Activated CD4-positive, alpha-beta T cell treated with anti-CD3 and anti-CD28 coated beads for 36 hours (primary cell): ENCODE measurements at regions of chr11 and their contacts with region 1.

Region 1: GRCh38 chr11:59668950-59669610 is at the start of gene PATL1:
- DNase-seq: peak; percentile 99
- ATAC-seq: peak; percentile 93
- H3K4me3 Mint-ChIP-seq: peak within 1 kb of the TSS; percentile 81
- H3K27ac Mint-ChIP-seq: peak within 1 kb of the TSS; percentile 92
- H3K4me1 Mint-ChIP-seq: peaks cover 37% of the 10 kb centered on the region
- H3K27me3 Mint-ChIP-seq: no peaks in the 10 kb centered on the region
- total RNA-seq, gene PATL1: 59.8 to 88.7 TPM

Region 2: DNA sequence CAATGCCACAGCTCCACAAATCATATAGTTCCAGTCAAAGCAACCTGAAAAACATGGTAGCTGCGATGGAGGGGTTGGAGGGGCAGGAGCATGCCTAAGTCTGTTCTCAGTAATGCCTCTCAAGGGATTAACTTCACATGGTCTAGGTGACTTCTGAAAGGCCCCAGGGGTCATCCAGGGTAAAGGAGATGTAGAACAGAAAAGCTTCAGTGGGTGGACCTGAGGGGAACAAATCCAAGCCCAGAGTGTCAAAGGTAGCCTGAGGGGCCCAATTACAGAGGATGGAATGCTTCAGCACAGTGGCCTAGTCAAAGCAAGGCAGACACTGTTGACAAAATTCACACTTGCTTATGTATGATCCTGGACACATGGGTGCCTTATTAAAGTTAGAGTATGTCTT is 134.4 kb before region 1 on chr11:
- CTCF ChIA-PET with region 1: interaction called, 3 read pairs
- POLR2A ChIA-PET with region 1: no interaction called
- intact Hi-C with region 1: loop called (anchors 2 to 5 kb)
- DNase-seq: no peak
- ATAC-seq: no peak
- H3K4me3 Mint-ChIP-seq: no peak overlapping the region
- H3K27ac Mint-ChIP-seq: no peak overlapping the region
- H3K4me1 Mint-ChIP-seq: peaks cover 13% of the 10 kb centered on the region
- H3K27me3 Mint-ChIP-seq: no peaks in the 10 kb centered on the region

Region 3: GRCh38 chr11:59550368-59550841 is 118.7 kb before region 1 on chr11:
- CTCF ChIA-PET with region 1: interaction called, 3 read pairs
- POLR2A ChIA-PET with region 1: no interaction called
- intact Hi-C with region 1: loop called (anchors 1 kb)
- DNase-seq: peak; percentile 95
- ATAC-seq: peak; percentile 91
- H3K4me3 Mint-ChIP-seq: peak overlapping the region; percentile 79
- H3K27ac Mint-ChIP-seq: peak overlapping the region; percentile 96
- H3K4me1 Mint-ChIP-seq: peaks cover 28% of the 10 kb centered on the region
- H3K27me3 Mint-ChIP-seq: peaks cover 2% of the 10 kb centered on the region

Region 4: GRCh38 chr11:59560702-59561469 is 108.2 kb before region 1 on chr11:
- CTCF ChIA-PET with region 1: interaction called, 4 read pairs
- POLR2A ChIA-PET with region 1: interaction called, 6 read pairs
- intact Hi-C with region 1: loop called in 1 of 2 experiments (anchors 1 kb)
- DNase-seq: peak; percentile 93
- ATAC-seq: peak; percentile 45
- H3K4me3 Mint-ChIP-seq: peak overlapping the region; percentile 93
- H3K27ac Mint-ChIP-seq: peak overlapping the region; percentile 96
- H3K4me1 Mint-ChIP-seq: peaks cover 41% of the 10 kb centered on the region
- H3K27me3 Mint-ChIP-seq: peaks cover 2% of the 10 kb centered on the region

Region 5: GRCh38 chr11:59615637-59616395 is 53.3 kb before region 1 on chr11 and contains the start of gene OSBP:
- CTCF ChIA-PET with region 1: interaction called, 4 read pairs
- POLR2A ChIA-PET with region 1: interaction called, 18 read pairs
- intact Hi-C with region 1: loop called (anchors 1 kb)
- DNase-seq: peak; percentile 98
- ATAC-seq: peak; percentile 88
- H3K4me3 Mint-ChIP-seq: peak within 1 kb of the TSS; percentile 99
- H3K27ac Mint-ChIP-seq: peak within 1 kb of the TSS; percentile 96
- H3K4me1 Mint-ChIP-seq: peaks cover 40% of the 10 kb centered on the region
- H3K27me3 Mint-ChIP-seq: no peaks in the 10 kb centered on the region
- total RNA-seq, gene OSBP: 37.9 to 44.2 TPM

Region 6: DNA sequence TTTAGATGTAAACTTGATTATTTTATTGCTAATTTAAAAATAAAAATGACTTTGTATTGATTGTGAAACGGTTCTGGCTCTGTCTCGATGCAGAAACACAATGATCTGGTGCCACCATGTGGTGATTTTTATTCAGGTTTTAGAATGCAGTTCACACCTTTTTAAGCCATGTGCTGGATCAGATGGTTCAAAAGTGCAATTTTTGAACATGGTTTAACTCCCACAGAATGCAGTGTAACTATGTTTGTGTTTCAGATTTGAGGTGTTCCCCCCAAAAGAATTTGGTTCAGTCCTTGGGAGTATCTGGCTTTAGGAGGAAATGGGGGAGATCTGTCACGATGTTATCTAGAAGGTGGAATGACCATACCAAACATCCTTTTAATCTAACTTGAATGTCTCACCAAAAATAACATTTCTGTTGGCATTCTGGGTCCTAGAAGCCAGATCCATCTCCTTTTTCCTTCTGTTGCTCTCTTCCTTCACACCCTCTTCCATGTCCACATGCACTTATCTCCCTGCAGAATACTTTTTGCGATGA is 133.6 kb after region 1 on chr11:
- CTCF ChIA-PET with region 1: interaction called, 6 read pairs
- POLR2A ChIA-PET with region 1: interaction called, 3 read pairs
- intact Hi-C with region 1: loop called in 1 of 2 experiments (anchors 2 kb)
- DNase-seq: peak; percentile 40
- ATAC-seq: peak; percentile 61
- H3K4me3 Mint-ChIP-seq: no peak overlapping the region
- H3K27ac Mint-ChIP-seq: no peak overlapping the region
- H3K4me1 Mint-ChIP-seq: no peaks in the 10 kb centered on the region
- H3K27me3 Mint-ChIP-seq: no peaks in the 10 kb centered on the region

Region 7: DNA sequence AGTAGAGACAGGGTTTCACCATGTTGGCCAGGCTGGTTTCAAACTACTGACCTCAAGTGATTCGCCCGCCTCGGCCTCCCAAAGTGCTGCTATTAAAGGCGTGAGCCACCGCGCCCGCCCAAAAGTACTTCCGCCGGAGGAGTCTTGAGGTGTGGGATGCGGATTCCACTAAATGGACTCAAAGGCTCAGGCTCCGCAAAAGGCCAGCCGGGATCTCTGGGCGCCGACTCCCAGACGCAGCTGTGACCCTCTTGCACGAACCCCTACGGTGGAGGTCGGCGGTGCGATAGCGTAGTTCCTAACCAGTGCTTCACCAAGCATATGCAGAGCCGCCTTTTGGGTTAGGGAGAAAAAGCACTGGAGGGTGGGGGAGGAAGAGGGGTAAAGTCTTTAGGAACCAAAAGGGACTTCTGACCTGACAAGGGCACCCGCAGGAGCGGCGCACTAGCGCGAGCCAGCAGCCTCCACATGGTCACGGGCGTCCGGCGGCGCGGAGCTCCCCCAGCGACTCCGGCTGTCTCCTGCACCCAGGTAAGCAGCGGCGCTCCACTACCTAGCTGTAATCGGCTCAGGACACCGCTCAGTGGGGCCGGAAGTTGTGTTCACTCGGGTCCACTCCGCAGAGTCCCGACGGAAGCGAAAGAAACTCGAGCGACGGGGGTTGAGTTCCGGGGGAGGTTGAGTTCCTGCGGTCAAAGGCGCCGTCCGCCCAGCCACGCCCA is 141.3 kb after region 1 on chr11 and contains the start of gene MRPL16:
- CTCF ChIA-PET with region 1: no interaction called
- POLR2A ChIA-PET with region 1: no interaction called
- intact Hi-C with region 1: loop called (anchors 1 to 2 kb)
- DNase-seq: peak; percentile 94
- ATAC-seq: peak; percentile 99
- H3K4me3 Mint-ChIP-seq: peak within 1 kb of the TSS; percentile 88
- H3K27ac Mint-ChIP-seq: peak within 1 kb of the TSS; percentile 88
- H3K4me1 Mint-ChIP-seq: peaks cover 18% of the 10 kb centered on the region
- H3K27me3 Mint-ChIP-seq: no peaks in the 10 kb centered on the region
- total RNA-seq, gene MRPL16: 77.9 to 82.6 TPM